Activated naive CD4-positive, alpha-beta T cell treated with anti-CD3 and anti-CD28 coated beads for 36 hours (primary cell): ENCODE measurements at regions of chr14 and their contacts with region 1.

Region 1: DNA sequence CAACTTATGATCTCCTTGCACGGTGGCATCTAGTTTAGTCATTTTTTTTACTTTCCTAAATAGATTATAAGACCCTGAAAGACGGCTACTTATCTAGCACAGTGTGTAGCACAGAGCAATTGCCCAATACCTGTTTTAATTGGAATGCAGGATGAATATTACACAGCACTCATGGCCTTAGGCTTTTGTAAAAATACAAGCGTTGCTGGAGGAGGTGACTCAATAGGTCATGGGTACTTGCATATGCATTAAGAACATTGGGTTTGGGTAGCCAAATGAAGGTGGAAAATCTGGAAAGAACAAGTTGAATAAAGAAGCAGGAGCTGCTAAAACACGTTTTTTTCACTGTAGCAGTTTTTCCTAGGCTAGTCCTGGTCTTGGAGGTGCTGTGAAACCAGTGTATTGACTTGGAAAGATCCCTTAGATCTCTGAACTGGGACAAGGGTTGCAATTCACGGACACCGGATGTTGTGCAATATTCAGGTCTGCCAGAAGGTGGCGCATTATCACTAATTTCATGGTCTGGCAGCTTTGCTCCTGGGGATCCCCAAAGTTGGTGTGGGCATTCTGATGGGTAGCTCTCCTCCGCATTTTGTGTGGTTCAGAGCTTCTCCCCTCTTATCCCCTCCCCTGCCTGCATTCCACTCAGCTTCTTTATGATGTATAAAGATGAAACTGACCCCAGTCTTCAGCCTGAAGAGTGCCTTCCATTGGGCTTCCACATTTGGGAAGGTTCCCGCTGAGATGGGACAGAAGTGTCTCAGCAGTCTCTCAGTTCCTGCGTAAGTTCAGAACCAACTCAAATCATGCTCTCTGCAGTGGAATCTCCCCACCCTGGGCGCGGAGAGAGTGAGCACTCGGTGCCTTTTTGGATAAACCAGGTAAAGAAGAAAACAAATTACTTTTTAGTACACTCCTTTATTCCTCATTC is 278.3 kb downstream of the NRXN3 start:
- DNase-seq: peak; percentile 68
- H3K4me3 Mint-ChIP-seq: no peak overlapping the region
- H3K27ac Mint-ChIP-seq: no peak overlapping the region
- H3K4me1 Mint-ChIP-seq: no peaks in the 10 kb centered on the region
- H3K27me3 Mint-ChIP-seq: no peaks in the 10 kb centered on the region

Region 2: DNA sequence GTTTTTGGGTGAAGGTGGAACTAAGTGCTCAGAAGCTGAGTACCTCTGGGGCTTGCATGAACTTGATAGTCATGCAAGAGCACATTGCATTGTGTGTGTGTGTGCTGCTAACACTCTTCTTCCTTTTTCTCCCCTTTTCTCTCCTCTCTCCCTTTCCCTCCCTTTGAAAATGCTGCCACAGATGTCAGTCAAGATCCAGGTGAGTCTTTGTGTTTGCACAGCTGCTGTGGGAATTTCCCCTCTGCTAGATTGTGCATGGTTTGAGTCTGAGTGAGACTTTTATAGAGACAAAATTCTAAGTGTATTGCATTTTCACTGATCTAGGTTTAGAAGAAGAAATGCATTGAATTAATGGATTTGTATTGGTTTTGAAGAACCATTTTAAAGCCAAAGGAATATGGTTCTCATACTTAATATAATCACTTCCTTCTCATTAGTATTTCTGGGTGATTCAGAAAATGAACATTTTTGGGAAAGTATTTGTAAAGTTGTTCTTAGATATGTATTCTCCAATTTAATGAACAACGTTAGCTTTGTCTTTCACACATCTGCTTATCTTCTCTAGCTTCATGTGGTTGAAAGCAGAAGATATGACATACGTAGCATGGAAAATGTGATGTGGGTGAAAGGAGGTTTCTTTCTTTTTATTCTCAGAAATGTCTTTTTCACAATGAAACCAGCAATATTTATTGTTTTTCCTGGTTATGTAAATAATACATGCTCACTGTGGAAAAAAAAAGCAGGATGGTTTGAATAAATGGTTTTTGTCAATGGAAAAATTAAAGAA is 169.8 kb before region 1 on chr14:
- CTCF ChIA-PET with region 1: no interaction called
- intact Hi-C with region 1: no loop called
- DNase-seq: no peak
- H3K4me3 Mint-ChIP-seq: no peak overlapping the region
- H3K27ac Mint-ChIP-seq: no peak overlapping the region
- H3K4me1 Mint-ChIP-seq: no peaks in the 10 kb centered on the region
- H3K27me3 Mint-ChIP-seq: peaks cover 8% of the 10 kb centered on the region

Region 3: GRCh38 chr14:78425330-78425729 is 23.1 kb before region 1 on chr14:
- CTCF ChIA-PET with region 1: no interaction called
- intact Hi-C with region 1: no loop called
- DNase-seq: no peak
- H3K4me3 Mint-ChIP-seq: no peak overlapping the region
- H3K27ac Mint-ChIP-seq: no peak overlapping the region
- H3K4me1 Mint-ChIP-seq: no peaks in the 10 kb centered on the region
- H3K27me3 Mint-ChIP-seq: peaks cover 2% of the 10 kb centered on the region

Region 4: GRCh38 chr14:78509516-78509915 is 61.1 kb after region 1 on chr14:
- CTCF ChIA-PET with region 1: no interaction called
- intact Hi-C with region 1: no loop called
- DNase-seq: no peak
- H3K4me3 Mint-ChIP-seq: no peak overlapping the region
- H3K27ac Mint-ChIP-seq: no peak overlapping the region
- H3K4me1 Mint-ChIP-seq: no peaks in the 10 kb centered on the region
- H3K27me3 Mint-ChIP-seq: no peaks in the 10 kb centered on the region

Region 5: GRCh38 chr14:78598041-78598920 is 149.9 kb after region 1 on chr14:
- CTCF ChIA-PET with region 1: interaction called, 5 read pairs
- intact Hi-C with region 1: loop called (anchors 1 kb)
- DNase-seq: peak; percentile 69
- H3K4me3 Mint-ChIP-seq: no peak overlapping the region
- H3K27ac Mint-ChIP-seq: no peak overlapping the region
- H3K4me1 Mint-ChIP-seq: no peaks in the 10 kb centered on the region
- H3K27me3 Mint-ChIP-seq: peaks cover 20% of the 10 kb centered on the region

Region 6: DNA sequence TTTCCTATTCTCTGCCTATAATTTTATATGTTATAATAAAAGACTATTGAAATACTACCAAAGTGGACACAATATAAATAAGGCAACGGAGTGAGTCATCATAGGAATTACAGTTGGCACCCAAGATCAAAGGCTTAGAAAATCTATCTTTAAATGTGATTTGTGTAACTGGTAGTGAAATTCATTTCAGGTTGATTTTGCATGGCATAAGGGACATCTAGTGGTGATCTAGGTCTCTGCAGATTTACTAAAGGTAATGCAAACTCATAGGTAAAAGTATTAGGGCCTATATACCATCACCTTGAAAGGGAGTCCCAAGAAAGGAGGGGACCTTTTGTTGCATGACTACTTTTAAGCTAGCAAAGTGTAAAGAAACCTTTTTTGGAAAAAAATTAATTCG is 248.9 kb after region 1 on chr14:
- CTCF ChIA-PET with region 1: no interaction called
- intact Hi-C with region 1: loop called (anchors 2 kb)
- DNase-seq: no peak
- H3K4me3 Mint-ChIP-seq: no peak overlapping the region
- H3K27ac Mint-ChIP-seq: no peak overlapping the region
- H3K4me1 Mint-ChIP-seq: no peaks in the 10 kb centered on the region
- H3K27me3 Mint-ChIP-seq: no peaks in the 10 kb centered on the region

Region 7: DNA sequence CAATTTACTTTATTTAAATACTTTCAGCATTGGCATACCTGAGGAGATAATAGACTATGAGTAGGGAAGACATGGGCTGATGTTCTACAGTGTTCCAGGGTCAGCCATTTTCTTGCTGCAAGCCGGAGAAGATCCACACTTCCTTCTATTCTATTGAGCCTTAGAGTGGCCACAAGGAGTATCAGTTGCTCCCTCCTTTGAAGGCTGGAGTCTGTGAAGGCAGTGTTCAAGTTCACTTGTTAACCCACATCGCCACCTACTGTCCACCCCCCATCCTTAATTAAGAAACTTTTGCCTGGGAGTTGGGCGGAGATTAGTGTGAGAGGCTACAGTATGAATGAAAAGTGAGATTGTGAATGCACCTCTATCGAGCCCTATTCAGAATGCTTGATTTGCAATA is 388.3 kb after region 1 on chr14:
- CTCF ChIA-PET with region 1: no interaction called
- intact Hi-C with region 1: loop called (anchors 5 kb)
- DNase-seq: peak; percentile 45
- H3K4me3 Mint-ChIP-seq: no peak overlapping the region
- H3K27ac Mint-ChIP-seq: no peak overlapping the region
- H3K4me1 Mint-ChIP-seq: no peaks in the 10 kb centered on the region
- H3K27me3 Mint-ChIP-seq: no peaks in the 10 kb centered on the region